Transverse colon (tissue), 4 donors: ENCODE measurements at regions of chr15 and their contacts with region 1.

Region 1: DNA sequence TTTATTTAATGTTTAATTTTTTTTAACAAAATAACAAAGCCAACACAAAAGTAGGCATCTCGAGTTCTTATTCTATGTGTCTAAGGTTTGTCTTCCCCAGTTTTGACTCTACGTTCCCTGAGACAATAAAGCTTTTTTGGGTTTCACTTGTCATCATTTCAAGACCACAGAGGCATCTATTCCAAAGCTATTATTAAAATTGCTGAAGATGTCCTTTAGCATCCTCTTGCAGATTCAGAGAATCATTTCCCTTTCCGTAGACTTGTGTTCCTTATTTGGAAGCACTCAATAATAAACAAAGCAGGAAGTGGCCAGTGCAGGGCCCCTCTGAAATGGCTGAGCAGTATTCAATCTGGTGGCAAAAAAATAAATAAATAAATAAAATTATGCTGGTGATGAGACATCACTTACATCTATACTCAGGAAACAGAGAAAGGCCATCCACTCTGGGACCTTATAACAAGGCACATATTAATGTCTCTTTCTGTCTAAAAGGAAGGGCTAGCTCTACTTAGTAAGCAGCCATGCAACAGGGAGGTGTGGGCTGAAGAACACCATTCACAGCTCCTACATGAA is 362.3 kb downstream of the WDR72 start:
- DNase-seq: no peak
- H3K4me3 ChIP-seq: no peak overlapping the region
- H3K27ac ChIP-seq: no peak overlapping the region
- H3K4me1 ChIP-seq: no peaks in the 10 kb centered on the region
- H3K27me3 ChIP-seq: no peaks in the 10 kb centered on the region
- CTCF ChIP-seq: no peak
- EP300 ChIP-seq: no peak
- POLR2A ChIP-seq: no peak

Region 2: GRCh38 chr15:54519577-54519976 is 1122.4 kb after region 1 on chr15:
- in situ Hi-C with region 1: no loop called
- intact Hi-C with region 1: loop called (anchors 10 kb)
- DNase-seq: no peak
- H3K4me3 ChIP-seq: no peak overlapping the region
- H3K27ac ChIP-seq: no peak overlapping the region
- H3K4me1 ChIP-seq: peaks cover 0 to 7% (median 0%) of the 10 kb centered on the region in 4 donors
- H3K27me3 ChIP-seq: no peaks in the 10 kb centered on the region
- CTCF ChIP-seq: no peak
- EP300 ChIP-seq: no peak
- POLR2A ChIP-seq: no peak